Activated T-helper 1 cell treated with anti-CD3 and anti-CD28 coated beads, Interleukin-12 subunit alpha, Interleukin-12 subunit beta, Interleukin-2, Interleukin-4 antibody, amounts not matched to agents 30 ng/mL and 10 ng/mL and 1 ng/mL, durations not matched to agents 14 hours and 24 hours and 36 hours (primary cell): ENCODE measurements at regions of chrX and their contacts with region 1.

Region 1: DNA sequence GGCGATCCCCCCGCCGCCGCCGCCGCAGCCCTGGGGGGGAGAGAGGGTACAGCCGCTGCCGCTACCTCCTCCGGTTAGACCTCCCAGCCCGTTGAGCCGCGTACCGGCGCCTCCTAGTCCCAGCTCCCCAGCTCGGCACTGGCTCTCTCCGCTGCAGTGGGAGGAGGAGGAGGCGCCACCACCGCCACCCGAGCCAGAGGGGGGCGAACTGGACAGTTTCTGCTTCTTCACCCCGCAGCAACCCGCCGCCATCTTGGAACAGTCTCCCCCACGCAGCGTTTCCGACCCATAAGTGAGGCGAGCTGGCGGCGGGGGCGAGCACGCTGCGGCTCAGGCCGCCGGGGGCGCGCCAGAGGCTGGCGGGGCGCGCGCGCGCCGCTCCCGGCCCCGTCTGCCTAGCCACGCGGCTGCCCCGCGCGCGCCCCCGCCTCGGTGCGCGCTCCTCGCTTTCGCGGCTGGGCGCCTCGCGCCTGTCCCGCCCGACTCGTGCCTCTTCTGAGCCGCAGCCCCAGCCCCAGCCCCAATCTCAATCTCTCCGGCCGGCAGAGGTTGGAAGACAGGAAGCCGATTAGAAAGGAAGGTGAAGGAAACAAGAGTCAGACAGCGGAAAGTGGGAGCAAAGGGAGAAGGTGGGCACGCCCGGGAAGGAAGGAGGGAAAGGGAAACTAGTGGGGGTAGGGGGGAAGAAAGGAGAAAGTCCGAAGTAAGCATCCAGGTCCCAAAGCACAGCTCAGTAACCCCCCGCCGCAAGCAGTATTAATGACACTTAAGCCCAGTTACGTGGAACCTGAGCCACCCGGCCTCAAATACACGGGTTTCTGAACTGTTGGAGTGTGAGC is at the start of gene AMMECR1:
- DNase-seq: peak; percentile 74
- H3K4me3 Mint-ChIP-seq: peak within 1 kb of the TSS; percentile 91
- H3K27ac Mint-ChIP-seq: peak within 1 kb of the TSS; percentile 84
- H3K4me1 Mint-ChIP-seq: peaks cover 23% of the 10 kb centered on the region
- H3K27me3 Mint-ChIP-seq: peaks cover 9% of the 10 kb centered on the region
- total RNA-seq, gene AMMECR1: 11.9 and 14.1 TPM in 2 replicates

Region 2: DNA sequence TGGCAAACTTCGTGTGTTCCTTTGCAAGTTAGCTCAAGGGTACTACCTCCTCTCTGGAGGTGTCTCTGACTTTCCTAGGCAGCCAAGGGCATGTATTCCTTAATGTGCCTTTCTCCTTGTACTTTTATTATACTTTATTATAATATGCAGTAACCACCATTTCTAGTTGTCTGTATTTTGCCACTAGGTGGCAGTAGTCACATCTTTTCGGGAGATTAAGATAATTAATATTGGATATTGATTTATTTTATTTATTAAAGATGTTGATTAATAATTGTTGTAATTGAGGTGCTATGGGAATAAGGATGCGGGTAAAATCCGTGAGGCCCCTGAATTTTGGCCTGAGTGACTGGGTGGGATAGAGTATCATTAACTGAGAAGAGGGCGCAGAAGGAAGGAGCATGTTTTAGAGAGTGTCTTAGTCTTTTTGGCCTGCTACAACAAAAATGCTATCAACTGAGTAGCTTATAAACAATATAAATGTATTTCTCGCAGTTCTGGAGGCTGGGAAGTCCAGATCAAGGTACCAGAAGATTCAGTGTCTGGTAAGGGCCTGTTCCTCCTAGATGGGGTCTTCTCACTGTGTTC is 161.8 kb before region 1 on chrX:
- intact Hi-C with region 1: loop called (anchors 2 kb)
- DNase-seq: no peak
- H3K4me3 Mint-ChIP-seq: no peak overlapping the region
- H3K27ac Mint-ChIP-seq: no peak overlapping the region
- H3K4me1 Mint-ChIP-seq: peaks cover 20% of the 10 kb centered on the region
- H3K27me3 Mint-ChIP-seq: no peaks in the 10 kb centered on the region

Region 3: GRCh38 chrX:110228453-110228852 is 89.6 kb before region 1 on chrX:
- intact Hi-C with region 1: loop called (anchors 2 kb)
- DNase-seq: no peak
- H3K4me3 Mint-ChIP-seq: no peak overlapping the region
- H3K27ac Mint-ChIP-seq: no peak overlapping the region
- H3K4me1 Mint-ChIP-seq: peaks cover 25% of the 10 kb centered on the region
- H3K27me3 Mint-ChIP-seq: no peaks in the 10 kb centered on the region

Region 4: GRCh38 chrX:111123125-111123524 is 805.1 kb after region 1 on chrX:
- intact Hi-C with region 1: loop called (anchors 10 kb)
- DNase-seq: no peak
- H3K4me3 Mint-ChIP-seq: peak overlapping the region; percentile 65
- H3K27ac Mint-ChIP-seq: peak overlapping the region; percentile 79
- H3K4me1 Mint-ChIP-seq: peaks cover 12% of the 10 kb centered on the region
- H3K27me3 Mint-ChIP-seq: no peaks in the 10 kb centered on the region